Left colon (tissue), 2 donors: ENCODE measurements at regions of chr16 and their contacts with region 1.

Region 1: DNA sequence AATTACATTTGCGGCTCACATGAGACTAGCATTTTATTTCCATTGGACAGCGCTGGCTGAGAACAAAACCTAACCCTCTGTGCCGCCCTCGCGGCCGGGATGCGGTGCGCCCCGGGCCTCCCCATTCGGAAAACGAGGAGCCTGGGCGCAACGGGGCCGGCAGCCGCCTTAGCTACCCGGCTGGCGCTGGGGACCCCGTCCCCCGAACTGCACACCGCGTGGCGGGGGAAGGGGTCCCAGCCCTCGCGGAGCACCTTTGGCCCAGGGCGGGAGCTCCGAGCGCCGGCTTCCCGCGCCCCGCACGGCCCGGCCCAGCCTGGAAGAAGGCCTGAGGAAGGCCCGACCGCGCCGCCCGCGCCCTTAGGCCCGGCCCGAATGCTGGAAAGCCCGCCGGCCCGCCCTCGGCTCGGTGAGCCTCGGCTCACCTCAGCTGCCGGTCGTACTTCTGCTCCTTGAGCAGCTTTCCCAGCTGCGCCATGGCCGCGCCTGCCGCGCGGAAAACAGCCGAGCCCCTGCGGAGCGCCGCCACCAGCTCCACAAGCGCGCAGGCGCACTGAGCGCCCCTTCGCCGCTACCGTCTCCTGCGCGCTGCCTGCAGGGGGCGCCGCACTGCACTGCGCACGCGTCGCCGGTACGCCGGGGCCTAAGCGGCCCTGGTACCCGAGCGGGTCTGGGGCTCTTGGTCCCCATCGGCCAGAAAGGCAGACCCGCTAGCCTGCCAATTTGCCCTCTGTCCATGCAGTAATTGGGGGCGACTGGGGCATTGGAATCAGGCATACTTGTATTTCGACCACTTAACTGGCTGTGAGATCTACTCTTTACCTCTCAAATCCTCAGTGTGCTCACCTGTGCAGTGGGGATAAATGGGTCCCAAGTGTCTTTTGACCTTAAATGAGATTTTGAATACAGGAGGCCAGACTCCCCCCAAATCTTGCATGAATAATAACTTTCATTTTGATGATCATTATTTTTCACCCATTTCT is at the start of gene NAE1:
- DNase-seq: peak; percentile 72 to 91
- ATAC-seq: peak; percentile 90
- total RNA-seq, gene NAE1: 45.7 to 53.2 TPM

Region 2: GRCh38 chr16:66728117-66728787 is 102.5 kb before region 1 on chr16:
- intact Hi-C with region 1: no loop called
- DNase-seq: peak in 1 of 2 donors; percentile 41
- ATAC-seq: peak; percentile 84

Region 3: DNA sequence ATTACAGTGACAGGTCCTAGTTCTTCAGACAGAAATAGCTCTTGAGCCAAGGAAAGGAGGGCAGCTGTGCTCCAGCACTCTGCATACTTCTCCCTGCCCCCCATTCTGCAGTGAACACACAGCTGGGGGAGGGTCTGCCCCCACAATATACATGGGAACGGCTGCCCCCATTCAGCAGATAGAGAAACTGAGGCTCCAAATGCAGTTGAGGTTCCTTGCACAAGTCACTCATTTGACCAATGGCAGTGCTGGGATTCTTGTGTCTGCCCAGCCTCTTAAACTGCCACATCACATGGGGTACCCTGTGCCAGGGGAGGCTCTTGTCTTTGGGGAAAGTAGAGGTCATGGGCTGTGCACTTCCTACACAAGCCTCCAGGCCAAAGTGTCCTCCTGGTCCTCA is 38.7 kb after region 1 on chr16:
- intact Hi-C with region 1: loop called in 1 of 2 experiments (anchors 5 kb)
- DNase-seq: no peak
- ATAC-seq: no peak

Region 4: GRCh38 chr16:66894948-66895688 is 64.4 kb after region 1 on chr16:
- intact Hi-C with region 1: no loop called
- DNase-seq: peak; percentile 76 to 82
- ATAC-seq: peak; percentile 78

Region 5: DNA sequence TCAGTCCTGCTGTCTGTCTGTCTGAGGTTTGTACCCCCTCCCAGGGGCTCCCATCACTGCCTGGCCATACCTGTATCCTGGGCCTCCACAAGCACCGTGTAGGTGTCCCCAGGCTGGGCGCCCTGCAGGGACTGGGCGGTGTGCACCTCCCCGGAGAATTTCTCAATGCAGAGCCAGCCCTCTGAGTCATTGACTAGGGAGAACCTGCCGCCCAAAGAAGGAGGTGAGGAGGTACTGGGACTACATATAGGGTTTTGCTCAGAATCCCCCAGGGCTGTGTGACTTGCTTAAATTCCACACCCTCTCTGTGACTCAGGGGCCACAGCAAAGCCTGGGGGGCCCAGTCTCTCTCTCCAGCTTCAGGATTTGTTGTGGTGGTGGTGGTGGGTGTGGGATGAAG is 80.4 kb after region 1 on chr16:
- intact Hi-C with region 1: no loop called
- DNase-seq: no peak
- ATAC-seq: no peak